OCI-LY7 (cell line): ENCODE measurements at regions of chr10 and their contacts with region 1.

Region 1: GRCh38 chr10:114043532-114044246 is at the start of gene ADRB1:
- DNase-seq: peak; percentile 78
- H3K4me3 ChIP-seq: peak within 1 kb of the TSS; percentile 72
- H3K27ac ChIP-seq: no peak within 1 kb of the TSS
- H3K4me1 ChIP-seq: peaks cover 8% of the 10 kb centered on the region
- CTCF ChIP-seq: no peak
- total RNA-seq, gene ADRB1: 1.1 and 2.0 TPM in 2 replicates

Region 2: DNA sequence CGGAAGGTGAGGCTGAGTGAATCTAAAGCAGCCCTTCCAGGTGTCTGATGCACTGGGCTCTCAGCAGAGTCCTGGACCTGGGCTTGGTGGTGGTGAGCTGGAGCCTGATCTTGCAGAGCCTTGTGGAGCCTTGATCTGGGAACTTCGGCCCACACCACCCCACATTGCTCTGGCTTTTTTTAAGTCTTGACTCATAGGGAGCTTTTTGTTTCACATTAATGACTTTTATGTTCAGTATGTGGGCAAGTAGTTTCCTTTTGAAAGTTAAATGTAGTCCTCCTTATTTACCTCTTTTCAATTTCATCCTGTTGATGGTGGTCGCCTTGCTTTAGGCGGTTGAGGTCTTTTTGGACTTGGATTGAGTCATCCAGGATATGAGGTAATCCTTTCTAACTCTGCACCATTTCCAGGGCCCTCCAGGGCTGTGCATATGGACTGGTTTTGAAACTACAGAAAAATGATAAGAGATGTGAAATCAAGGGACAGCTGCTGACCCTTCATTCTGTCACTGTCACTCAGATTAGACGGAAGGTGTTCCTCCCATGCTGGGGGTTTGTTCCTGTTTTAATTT is 376.9 kb before region 1 on chr10:
- CTCF ChIA-PET with region 1: no interaction called
- POLR2A ChIA-PET with region 1: no interaction called
- intact Hi-C with region 1: no loop called
- DNase-seq: no peak
- H3K4me3 ChIP-seq: no peak overlapping the region
- H3K27ac ChIP-seq: no peak overlapping the region
- H3K4me1 ChIP-seq: no peaks in the 10 kb centered on the region
- CTCF ChIP-seq: no peak

Region 3: GRCh38 chr10:113958631-113959382 is 84.9 kb before region 1 on chr10:
- CTCF ChIA-PET with region 1: no interaction called
- POLR2A ChIA-PET with region 1: interaction called, 7 read pairs
- intact Hi-C with region 1: loop called (anchors 2 kb)
- DNase-seq: no peak
- H3K4me3 ChIP-seq: no peak overlapping the region
- H3K27ac ChIP-seq: peak overlapping the region; percentile 88
- H3K4me1 ChIP-seq: peaks cover 51% of the 10 kb centered on the region
- CTCF ChIP-seq: no peak

Region 4: GRCh38 chr10:113965683-113966082 is 78.0 kb before region 1 on chr10:
- CTCF ChIA-PET with region 1: no interaction called
- POLR2A ChIA-PET with region 1: interaction called, 7 read pairs
- intact Hi-C with region 1: loop called (anchors 1 kb)
- DNase-seq: peak; percentile 39
- H3K4me3 ChIP-seq: peak overlapping the region; percentile 37
- H3K27ac ChIP-seq: peak overlapping the region; percentile 55
- H3K4me1 ChIP-seq: peaks cover 61% of the 10 kb centered on the region
- CTCF ChIP-seq: no peak

Region 5: GRCh38 chr10:114064151-114065048 is 20.7 kb after region 1 on chr10:
- CTCF ChIA-PET with region 1: no interaction called
- POLR2A ChIA-PET with region 1: interaction called, 13 read pairs
- intact Hi-C with region 1: no loop called
- DNase-seq: no peak
- H3K4me3 ChIP-seq: no peak overlapping the region
- H3K27ac ChIP-seq: no peak overlapping the region
- H3K4me1 ChIP-seq: peaks cover 20% of the 10 kb centered on the region
- CTCF ChIP-seq: no peak

Region 6: GRCh38 chr10:114173921-114174694 is 130.4 kb after region 1 on chr10 and contains the start of gene CCDC186:
- CTCF ChIA-PET with region 1: no interaction called
- POLR2A ChIA-PET with region 1: no interaction called
- intact Hi-C with region 1: no loop called
- DNase-seq: peak; percentile 96
- H3K4me3 ChIP-seq: peak within 1 kb of the TSS; percentile 73
- H3K27ac ChIP-seq: no peak within 1 kb of the TSS
- H3K4me1 ChIP-seq: peaks cover 16% of the 10 kb centered on the region
- CTCF ChIP-seq: no peak
- total RNA-seq, gene CCDC186: 5.3 and 8.1 TPM in 2 replicates